Right ventricle myocardium inferior (tissue), 1 donor: ENCODE measurements at regions of chr4 and their contacts with region 1.

Region 1: GRCh38 chr4:55321707-55322264 is 24.3 kb upstream of the SRD5A3 start:
- DNase-seq: no peak
- ATAC-seq: no peak

Region 2: GRCh38 chr4:54971474-54971950 is 350.3 kb before region 1 on chr4:
- intact Hi-C with region 1: loop called (anchors 2 kb)
- DNase-seq: no peak
- ATAC-seq: peak; percentile 79

Region 3: GRCh38 chr4:54999003-54999402 is 322.8 kb before region 1 on chr4:
- intact Hi-C with region 1: loop called (anchors 1 kb)
- DNase-seq: no peak
- ATAC-seq: peak; percentile 60

Region 4: GRCh38 chr4:55116450-55116849 is 205.3 kb before region 1 on chr4:
- intact Hi-C with region 1: loop called (anchors 5 kb)
- DNase-seq: no peak
- ATAC-seq: no peak